Psoas muscle (tissue), 8 donors: ENCODE measurements at regions of chr20 and their contacts with region 1.

Region 1: DNA sequence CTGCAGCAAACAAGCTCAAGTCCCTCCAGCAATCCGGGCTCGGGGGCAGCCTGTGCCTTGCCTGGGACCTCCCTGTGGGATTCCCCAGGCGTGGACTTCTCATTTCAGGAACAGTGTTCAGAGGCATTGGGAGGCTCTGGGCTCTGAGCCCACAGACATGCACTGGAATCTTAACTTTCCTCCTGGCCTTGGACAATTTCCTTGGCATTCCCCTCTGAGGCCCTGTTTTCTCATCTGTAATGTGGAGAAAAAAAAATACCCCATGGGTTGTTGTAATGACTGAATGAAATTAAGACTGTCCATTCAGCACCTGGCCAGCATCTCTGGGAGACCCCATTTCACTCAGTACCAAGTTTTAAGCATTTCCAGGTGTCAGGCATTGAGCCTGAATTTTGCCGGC is 17.6 kb downstream of the BPIFB4 start:
- DNase-seq: no peak
- ATAC-seq: no peak
- H3K4me3 ChIP-seq: no peak overlapping the region
- H3K27ac ChIP-seq: no peak overlapping the region
- H3K4me1 ChIP-seq: no peaks in the 10 kb centered on the region
- H3K27me3 ChIP-seq: peaks cover 0 to 3% (median 3%) of the 10 kb centered on the region in 3 donors
- CTCF ChIP-seq: no peak

Region 2: GRCh38 chr20:32626859-32627636 is 470.0 kb before region 1 on chr20:
- intact Hi-C with region 1: no loop called
- DNase-seq: no peak
- ATAC-seq: peak in 1 of 4 donors; percentile 7
- H3K4me3 ChIP-seq: peak overlapping the region; percentile 6
- H3K27ac ChIP-seq: no peak overlapping the region
- H3K4me1 ChIP-seq: peaks cover 9% of the 10 kb centered on the region
- H3K27me3 ChIP-seq: peaks cover 0 to 10% (median 0%) of the 10 kb centered on the region in 3 donors
- CTCF ChIP-seq: no peak

Region 3: GRCh38 chr20:32902456-32903420 is 194.3 kb before region 1 on chr20:
- intact Hi-C with region 1: loop called in 1 of 2 experiments (anchors 5 kb)
- DNase-seq: peak; percentile 46 to 68
- ATAC-seq: peak; percentile 64 to 83 (median 72)
- H3K4me3 ChIP-seq: no peak overlapping the region
- H3K27ac ChIP-seq: no peak overlapping the region
- H3K4me1 ChIP-seq: no peaks in the 10 kb centered on the region
- H3K27me3 ChIP-seq: no peaks in the 10 kb centered on the region
- CTCF ChIP-seq: peak; percentile 90

Region 4: DNA sequence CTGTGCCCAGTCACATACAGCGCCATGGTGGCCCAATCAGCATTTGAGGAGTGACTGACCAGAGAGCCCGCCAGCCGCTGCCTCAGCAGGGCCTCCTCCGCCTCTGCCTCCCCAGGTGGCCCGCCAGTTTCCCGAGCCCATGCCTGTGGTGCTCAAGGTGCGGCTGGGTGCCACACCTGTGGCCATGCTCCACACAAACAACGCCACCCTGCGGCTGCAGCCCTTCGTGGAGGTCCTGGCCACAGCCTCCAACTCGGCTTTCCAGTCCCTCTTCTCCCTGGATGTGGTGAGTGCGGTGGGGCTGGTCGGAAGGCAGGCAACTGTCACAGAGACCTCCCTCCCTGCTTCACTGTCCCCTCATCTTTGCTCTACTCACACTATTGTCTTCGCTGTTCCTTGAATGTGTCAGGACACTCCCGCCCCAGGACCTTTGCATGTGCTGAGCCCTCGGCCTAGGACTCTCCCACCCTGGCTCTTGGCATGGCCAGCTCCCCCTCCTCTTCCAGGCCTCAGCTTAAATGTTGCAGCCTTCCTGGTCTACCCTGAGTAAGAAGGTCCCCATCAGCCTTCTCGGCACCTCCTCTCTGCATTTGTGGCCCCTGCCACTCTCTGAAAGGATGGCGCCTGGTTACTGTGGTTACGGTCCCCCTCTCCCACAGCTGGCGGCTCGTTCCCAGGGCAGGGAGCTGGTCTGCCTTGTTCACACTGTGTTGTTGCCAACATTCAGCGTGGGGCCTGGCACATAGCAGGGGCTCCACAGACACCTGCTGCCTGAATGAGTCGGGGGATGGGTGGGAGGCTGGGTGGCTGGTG is 77.3 kb before region 1 on chr20:
- intact Hi-C with region 1: no loop called
- DNase-seq: no peak
- ATAC-seq: no peak
- H3K4me3 ChIP-seq: no peak overlapping the region
- H3K27ac ChIP-seq: no peak overlapping the region
- H3K4me1 ChIP-seq: no peaks in the 10 kb centered on the region
- H3K27me3 ChIP-seq: peaks cover 0 to 39% (median 2%) of the 10 kb centered on the region in 3 donors
- CTCF ChIP-seq: no peak

Region 5: GRCh38 chr20:33169176-33169794 is 72.3 kb after region 1 on chr20:
- intact Hi-C with region 1: loop called in 1 of 2 experiments (anchors 10 kb)
- DNase-seq: no peak
- ATAC-seq: no peak
- H3K4me3 ChIP-seq: no peak overlapping the region
- H3K27ac ChIP-seq: no peak overlapping the region
- H3K4me1 ChIP-seq: no peaks in the 10 kb centered on the region
- H3K27me3 ChIP-seq: peaks cover 0 to 3% (median 0%) of the 10 kb centered on the region in 3 donors
- CTCF ChIP-seq: peak; percentile 52